MCF 10A (cell line): ENCODE measurements at regions of chr18 and their contacts with region 1.

Region 1: DNA sequence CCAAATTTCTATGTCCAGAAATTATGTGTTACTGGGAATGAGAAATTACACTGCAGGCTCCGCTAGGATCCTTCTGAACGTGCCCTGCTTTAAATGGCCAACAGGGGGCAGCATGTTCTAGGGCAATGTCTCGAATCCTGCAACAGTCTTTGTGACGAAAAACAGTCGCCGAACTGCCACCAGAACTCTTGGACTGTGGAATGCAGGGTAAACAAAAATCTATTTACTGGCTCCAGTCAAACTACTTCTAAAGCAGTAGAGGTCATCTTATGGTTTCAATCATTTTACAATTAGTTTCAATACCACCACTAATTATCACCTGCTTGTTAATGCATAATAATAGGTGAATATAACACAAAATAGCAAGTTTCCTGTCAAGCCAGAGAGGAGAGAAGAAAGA is 9.8 kb upstream of the ZNF397 start:
- DNase-seq: peak; percentile 82
- H3K4me3 Mint-ChIP-seq: peak overlapping the region; percentile 52
- H3K27ac Mint-ChIP-seq: no peak overlapping the region
- H3K4me1 Mint-ChIP-seq: peaks cover 4% of the 10 kb centered on the region
- H3K27me3 Mint-ChIP-seq: no peaks in the 10 kb centered on the region
- CTCF ChIP-seq: peak; percentile 83

Region 2: DNA sequence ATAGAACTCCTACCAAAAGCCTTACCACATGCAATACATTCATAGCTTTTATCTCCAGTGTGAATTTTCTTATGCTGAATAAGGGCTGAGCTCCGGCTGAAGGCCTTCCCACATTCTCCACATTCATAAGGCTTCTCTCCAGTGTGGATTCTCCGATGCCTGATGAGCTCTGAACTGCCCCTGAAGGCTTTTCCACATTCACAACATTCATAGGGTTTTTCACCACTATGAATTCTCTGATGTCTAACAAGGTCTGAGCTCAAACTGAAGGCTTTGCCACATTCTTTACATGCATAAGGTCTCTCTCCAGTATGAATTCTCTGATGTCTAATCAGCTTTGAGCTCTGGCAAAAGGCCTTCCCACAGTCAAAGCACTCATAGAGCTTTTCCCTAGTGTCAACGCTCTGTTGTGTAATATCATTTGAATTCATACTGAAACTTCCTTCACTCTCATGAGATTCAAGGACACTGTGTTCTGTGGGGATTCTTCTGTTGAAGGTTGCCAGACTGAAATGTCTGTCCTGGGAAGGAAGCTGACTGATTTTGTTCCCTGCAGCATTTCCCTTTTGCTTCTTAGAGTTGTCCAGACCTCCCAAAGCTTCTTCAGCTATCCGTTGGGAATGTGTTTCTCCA is 22.7 kb after region 1 on chr18:
- CTCF ChIA-PET with region 1: no interaction called
- POLR2A ChIA-PET with region 1: no interaction called
- intact Hi-C with region 1: no loop called
- DNase-seq: no peak
- H3K4me3 Mint-ChIP-seq: no peak overlapping the region
- H3K27ac Mint-ChIP-seq: no peak overlapping the region
- H3K4me1 Mint-ChIP-seq: no peaks in the 10 kb centered on the region
- H3K27me3 Mint-ChIP-seq: no peaks in the 10 kb centered on the region
- CTCF ChIP-seq: no peak

Region 3: DNA sequence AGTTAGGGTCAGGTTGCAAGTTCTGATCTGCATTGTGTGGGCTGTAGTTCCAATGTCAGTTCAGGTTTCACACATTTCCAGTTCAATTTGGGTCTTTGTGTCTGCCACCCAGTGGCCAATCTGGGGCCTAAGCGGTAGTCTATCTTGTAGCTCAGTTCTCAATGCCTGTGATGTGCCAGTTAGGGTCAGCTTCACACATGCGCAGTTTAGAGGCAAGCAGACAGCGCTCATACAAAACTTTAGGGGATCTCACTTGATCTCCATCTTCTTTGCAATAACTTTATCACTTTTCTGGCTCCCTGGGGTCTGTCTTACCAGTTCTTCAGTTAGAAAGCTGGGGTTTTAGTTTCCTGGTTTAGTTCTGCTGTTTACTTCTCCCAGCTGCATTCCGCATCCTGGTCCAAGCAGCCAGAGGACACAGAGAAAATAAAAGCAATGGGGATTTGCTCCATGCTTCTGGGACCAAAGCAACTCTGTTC is 124.1 kb after region 1 on chr18:
- CTCF ChIA-PET with region 1: interaction called, 61 read pairs
- POLR2A ChIA-PET with region 1: interaction called, 3 read pairs
- intact Hi-C with region 1: loop called (anchors 1 kb)
- DNase-seq: peak; percentile 72
- H3K4me3 Mint-ChIP-seq: no peak overlapping the region
- H3K27ac Mint-ChIP-seq: no peak overlapping the region
- H3K4me1 Mint-ChIP-seq: no peaks in the 10 kb centered on the region
- H3K27me3 Mint-ChIP-seq: no peaks in the 10 kb centered on the region
- CTCF ChIP-seq: peak; percentile 50

Region 4: GRCh38 chr18:35736696-35737095 is 505.6 kb after region 1 on chr18:
- CTCF ChIA-PET with region 1: no interaction called
- POLR2A ChIA-PET with region 1: no interaction called
- intact Hi-C with region 1: no loop called
- DNase-seq: no peak
- H3K4me3 Mint-ChIP-seq: no peak overlapping the region
- H3K27ac Mint-ChIP-seq: no peak overlapping the region
- H3K4me1 Mint-ChIP-seq: no peaks in the 10 kb centered on the region
- H3K27me3 Mint-ChIP-seq: no peaks in the 10 kb centered on the region
- CTCF ChIP-seq: no peak